Activated T-helper 2 cell treated with anti-CD3 and anti-CD28 coated beads, Interferon-gamma antibody, Interleukin-2, Interleukin-4, amounts not matched to agents 10 μg/mL and 5 μg/mL and 100 μg/mL, durations not matched to agents 14 hours and 24 hours and 36 hours (primary cell): ENCODE measurements at regions of chr5 and their contacts with region 1.

Region 1: GRCh38 chr5:137754126-137754960 is at the start of gene HNRNPA0:
- DNase-seq: peak; percentile 96
- H3K4me3 Mint-ChIP-seq: peak within 1 kb of the TSS; percentile 99
- H3K27ac Mint-ChIP-seq: peak within 1 kb of the TSS; percentile 100
- H3K4me1 Mint-ChIP-seq: peaks cover 21% of the 10 kb centered on the region
- H3K27me3 Mint-ChIP-seq: no peaks in the 10 kb centered on the region
- total RNA-seq, gene HNRNPA0: 37.2 and 37.5 TPM in 2 replicates

Region 2: GRCh38 chr5:137310051-137310730 is 444.2 kb before region 1 on chr5:
- intact Hi-C with region 1: no loop called
- DNase-seq: no peak
- H3K4me3 Mint-ChIP-seq: no peak overlapping the region
- H3K27ac Mint-ChIP-seq: no peak overlapping the region
- H3K4me1 Mint-ChIP-seq: no peaks in the 10 kb centered on the region
- H3K27me3 Mint-ChIP-seq: peaks cover 4% of the 10 kb centered on the region

Region 3: DNA sequence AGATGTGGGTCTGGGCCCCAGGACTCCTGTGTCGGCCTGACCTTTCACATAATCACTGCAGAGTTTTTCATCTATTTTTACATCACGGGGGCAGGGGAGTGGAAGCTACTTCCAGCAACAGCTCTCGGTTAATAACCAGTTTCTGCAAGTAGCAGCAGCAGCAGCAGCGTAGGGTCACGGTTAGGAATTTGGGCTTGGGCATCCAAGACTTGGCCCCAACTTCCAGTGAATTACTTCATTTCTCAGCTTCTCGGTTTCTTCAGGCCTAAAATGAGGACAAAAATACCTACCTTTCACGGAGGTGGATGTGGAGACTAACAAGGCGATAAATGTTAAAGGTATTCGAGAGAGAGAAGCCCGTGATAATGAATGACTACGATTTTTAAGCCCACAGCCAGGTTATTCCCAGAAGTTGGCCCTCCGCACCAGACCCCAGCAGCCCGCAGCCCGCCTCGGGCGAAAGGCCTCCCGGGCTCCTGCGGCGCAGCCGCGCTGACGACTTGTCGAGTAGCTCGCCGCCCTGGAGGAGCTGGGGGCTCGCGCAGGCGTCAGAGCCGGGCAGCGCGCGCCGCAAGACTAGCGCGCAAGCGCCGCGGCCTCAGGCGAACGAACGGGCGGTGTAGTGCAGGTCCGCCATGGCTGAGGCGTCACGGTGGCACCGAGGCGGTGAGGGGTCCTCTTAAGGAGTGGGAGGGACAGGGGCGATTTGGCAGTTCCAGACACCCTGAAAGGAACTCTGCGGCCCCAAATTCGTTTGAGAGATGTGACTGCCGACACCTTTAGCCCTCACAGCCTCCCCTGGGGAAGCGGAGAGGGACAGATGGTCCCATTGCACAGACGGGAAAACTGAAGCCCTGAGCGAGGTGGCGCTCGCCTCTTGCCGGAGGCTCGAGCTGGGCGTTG is 134.8 kb after region 1 on chr5 and contains the start of gene PKD2L2:
- intact Hi-C with region 1: loop called (anchors 5 kb)
- DNase-seq: peak; percentile 80
- H3K4me3 Mint-ChIP-seq: peak within 1 kb of the TSS; percentile 85
- H3K27ac Mint-ChIP-seq: peak within 1 kb of the TSS; percentile 91
- H3K4me1 Mint-ChIP-seq: peaks cover 17% of the 10 kb centered on the region
- H3K27me3 Mint-ChIP-seq: no peaks in the 10 kb centered on the region
- total RNA-seq, gene PKD2L2: not detected in 2 replicates

Region 4: DNA sequence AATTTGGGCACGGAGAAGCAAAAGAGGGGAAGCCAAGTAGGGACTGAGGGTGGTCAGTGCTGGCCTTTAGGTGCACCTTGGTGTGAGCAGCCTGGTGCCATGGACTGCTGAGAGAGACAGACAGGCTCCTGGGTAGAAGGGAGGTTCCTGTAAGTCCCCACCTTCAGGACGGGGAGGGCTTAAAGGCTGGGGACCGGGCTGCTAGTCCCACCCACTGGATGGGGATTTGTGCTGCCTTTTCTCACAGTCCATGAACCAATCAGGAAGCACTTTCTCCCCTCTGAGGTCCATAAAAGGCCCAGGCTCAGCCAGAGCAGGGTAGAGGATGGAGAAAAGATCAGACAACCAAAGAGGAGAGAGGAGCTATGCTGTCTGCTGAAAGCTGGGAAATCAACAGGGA is 562.0 kb after region 1 on chr5:
- intact Hi-C with region 1: no loop called
- DNase-seq: no peak
- H3K4me3 Mint-ChIP-seq: no peak overlapping the region
- H3K27ac Mint-ChIP-seq: no peak overlapping the region
- H3K4me1 Mint-ChIP-seq: no peaks in the 10 kb centered on the region
- H3K27me3 Mint-ChIP-seq: no peaks in the 10 kb centered on the region